ENCODE measurements at regions of chr3 and their contacts with region 1.

Region 1: DNA sequence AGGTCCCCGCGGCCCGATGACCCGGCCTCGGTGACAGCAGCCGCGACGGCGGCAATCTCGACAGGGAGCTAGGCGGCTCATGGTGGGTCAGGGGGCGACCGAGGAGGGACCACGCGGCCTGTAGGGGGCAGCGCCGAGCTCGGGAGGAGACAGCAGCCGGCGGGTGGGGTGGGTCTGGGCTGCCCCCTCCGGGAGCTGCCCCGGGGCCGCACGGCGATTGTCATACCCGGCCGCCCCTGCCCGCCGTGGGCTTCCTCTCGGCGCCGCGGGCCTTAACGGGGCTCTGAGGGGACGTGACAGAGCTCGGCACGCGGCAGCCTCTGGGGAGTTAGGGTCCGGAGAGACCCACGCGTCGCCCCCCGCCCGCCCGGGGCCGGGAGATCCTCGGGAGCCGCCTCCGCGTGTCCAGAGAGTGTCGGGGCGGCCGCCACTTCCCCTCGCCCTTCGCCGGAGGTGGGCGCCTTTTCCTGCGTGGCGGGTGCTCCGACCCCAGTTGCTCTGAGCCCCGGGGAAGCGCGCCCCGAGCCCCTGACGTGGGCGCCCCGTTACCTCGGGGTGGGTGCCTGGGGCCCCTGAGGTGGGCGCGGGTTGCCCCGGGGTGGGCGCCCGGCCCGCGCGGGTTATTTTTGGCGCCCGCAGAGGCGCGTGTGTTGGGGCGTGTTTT is 539 bp upstream of the PLCL2 start:
- DNase-seq: peak; percentile 60 to 91 (median 78)
- ATAC-seq: peak; percentile 74 to 78 (median 78)
- H3K4me3 ChIP-seq: peak overlapping the region; percentile 90 to 94 (median 92)
- H3K27ac ChIP-seq: peak overlapping the region; percentile 64 to 91 (median 82)
- H3K4me1 ChIP-seq: peaks cover 14 to 22% (median 14%) of the 10 kb centered on the region in 3 donors
- H3K27me3 ChIP-seq: no peaks in the 10 kb centered on the region
- CTCF ChIP-seq: peak; percentile 33 to 60 (median 58)

Region 2: GRCh38 chr3:16482770-16483531 is 401.3 kb before region 1 on chr3:
- intact Hi-C with region 1: no loop called
- DNase-seq: no peak
- ATAC-seq: peak in 2 of 4 donors; percentile 34 to 35
- H3K4me3 ChIP-seq: no peak overlapping the region
- H3K27ac ChIP-seq: no peak overlapping the region
- H3K4me1 ChIP-seq: peaks cover 0 to 6% (median 0%) of the 10 kb centered on the region in 3 donors
- H3K27me3 ChIP-seq: no peaks in the 10 kb centered on the region
- CTCF ChIP-seq: no peak

Region 3: GRCh38 chr3:16828815-16829214 is 55.4 kb before region 1 on chr3:
- intact Hi-C with region 1: no loop called
- DNase-seq: peak in 5 of 6 donors; percentile 35 to 56 (median 42)
- ATAC-seq: peak; percentile 58 to 92 (median 83)
- H3K4me3 ChIP-seq: no peak overlapping the region
- H3K27ac ChIP-seq: no peak overlapping the region
- H3K4me1 ChIP-seq: no peaks in the 10 kb centered on the region
- H3K27me3 ChIP-seq: no peaks in the 10 kb centered on the region
- CTCF ChIP-seq: peak in 2 of 4 donors; percentile 16 to 26

Region 4: DNA sequence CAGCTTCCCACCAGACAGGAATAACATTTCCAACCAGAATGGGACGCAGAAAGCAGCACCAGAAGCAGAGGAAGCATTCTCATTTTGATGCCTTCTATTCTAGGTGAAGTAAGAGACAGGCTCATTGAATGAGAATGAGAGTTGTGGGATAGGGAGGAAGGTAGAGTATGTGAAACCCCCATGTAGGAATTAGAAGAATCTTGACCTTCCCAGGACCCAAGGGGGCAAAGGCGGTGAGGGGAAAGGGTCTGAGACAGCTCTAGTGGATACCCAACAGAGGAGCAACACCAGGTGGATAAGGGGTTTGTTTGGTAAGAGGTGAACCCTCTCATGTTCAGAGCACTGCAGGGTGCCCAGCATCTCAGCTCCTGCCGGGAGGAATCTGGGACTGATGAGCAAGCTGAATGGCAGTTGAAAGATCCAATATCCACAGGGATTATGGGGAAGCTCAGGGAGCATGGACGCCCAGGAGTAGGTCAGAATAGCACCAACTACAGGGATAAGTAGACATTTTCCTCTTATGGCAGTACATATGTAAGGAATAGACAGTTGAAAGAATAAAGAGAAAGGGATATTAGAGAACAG is 77.5 kb after region 1 on chr3:
- intact Hi-C with region 1: no loop called
- DNase-seq: no peak
- ATAC-seq: no peak
- H3K4me3 ChIP-seq: no peak overlapping the region
- H3K27ac ChIP-seq: no peak overlapping the region
- H3K4me1 ChIP-seq: no peaks in the 10 kb centered on the region
- H3K27me3 ChIP-seq: no peaks in the 10 kb centered on the region
- CTCF ChIP-seq: no peak

Region 5: GRCh38 chr3:17006132-17006852 is 122.1 kb after region 1 on chr3:
- intact Hi-C with region 1: no loop called
- DNase-seq: no peak
- ATAC-seq: peak in 2 of 4 donors; percentile 11 to 25
- H3K4me3 ChIP-seq: no peak overlapping the region
- H3K27ac ChIP-seq: no peak overlapping the region
- H3K4me1 ChIP-seq: peaks cover 0 to 7% (median 5%) of the 10 kb centered on the region in 3 donors
- H3K27me3 ChIP-seq: no peaks in the 10 kb centered on the region
- CTCF ChIP-seq: no peak

Region 6: GRCh38 chr3:17032407-17033034 is 148.3 kb after region 1 on chr3:
- intact Hi-C with region 1: loop called in 2 of 3 experiments (anchors 5 to 10 kb)
- DNase-seq: no peak
- ATAC-seq: peak; percentile 78 to 98 (median 91)
- H3K4me3 ChIP-seq: no peak overlapping the region
- H3K27ac ChIP-seq: no peak overlapping the region
- H3K4me1 ChIP-seq: peaks cover 0 to 1% (median 0%) of the 10 kb centered on the region in 3 donors
- H3K27me3 ChIP-seq: no peaks in the 10 kb centered on the region
- CTCF ChIP-seq: peak; percentile 10 to 65 (median 54)